MCF 10A (cell line): ENCODE measurements at regions of chr11 and their contacts with region 1.

Region 1: DNA sequence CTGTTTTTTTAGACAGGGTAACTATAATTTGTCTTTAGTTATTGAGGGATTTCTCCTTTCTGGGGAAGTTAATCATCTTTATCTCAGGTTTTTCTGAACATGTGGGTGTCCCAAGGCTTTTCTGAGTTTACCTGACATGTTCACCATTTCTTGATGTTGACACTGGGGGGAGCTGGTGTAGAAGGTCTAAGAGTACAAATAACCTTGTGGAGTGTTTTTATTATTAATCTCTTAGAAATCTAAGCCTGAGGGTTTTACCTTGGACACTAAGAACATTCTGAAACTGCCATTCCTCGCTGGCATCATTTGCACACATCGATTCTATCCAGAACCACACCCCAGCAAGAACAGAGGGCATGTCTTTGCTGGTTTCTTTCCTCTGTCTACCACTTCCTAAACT is 15.6 kb upstream of the C11orf91 start:
- DNase-seq: peak; percentile 86
- H3K4me3 Mint-ChIP-seq: peak overlapping the region; percentile 53
- H3K27ac Mint-ChIP-seq: peak overlapping the region; percentile 78
- H3K4me1 Mint-ChIP-seq: peaks cover 31% of the 10 kb centered on the region
- H3K27me3 Mint-ChIP-seq: no peaks in the 10 kb centered on the region
- CTCF ChIP-seq: peak; percentile 45

Region 2: DNA sequence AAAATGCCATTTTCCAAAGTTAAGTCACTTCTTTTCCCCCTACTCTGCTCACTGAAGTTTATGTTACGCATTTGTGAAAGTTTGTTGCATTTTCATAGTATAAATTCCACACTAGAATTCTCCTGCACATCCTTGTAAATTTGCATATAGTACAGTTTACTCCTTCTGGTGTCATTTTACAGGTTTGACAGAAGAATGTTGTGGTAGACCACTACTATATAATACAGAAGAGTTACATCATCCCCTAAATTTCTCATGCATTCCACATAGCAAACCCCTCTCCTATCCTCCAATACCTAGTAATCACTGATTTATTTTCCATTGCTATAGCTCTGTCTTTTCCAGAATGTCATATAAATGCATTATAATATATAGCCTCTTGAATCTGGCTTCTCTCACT is 986.3 kb before region 1 on chr11:
- CTCF ChIA-PET with region 1: no interaction called
- POLR2A ChIA-PET with region 1: no interaction called
- intact Hi-C with region 1: no loop called
- DNase-seq: no peak
- H3K4me3 Mint-ChIP-seq: no peak overlapping the region
- H3K27ac Mint-ChIP-seq: no peak overlapping the region
- H3K4me1 Mint-ChIP-seq: no peaks in the 10 kb centered on the region
- H3K27me3 Mint-ChIP-seq: peaks cover 11% of the 10 kb centered on the region
- CTCF ChIP-seq: no peak

Region 3: DNA sequence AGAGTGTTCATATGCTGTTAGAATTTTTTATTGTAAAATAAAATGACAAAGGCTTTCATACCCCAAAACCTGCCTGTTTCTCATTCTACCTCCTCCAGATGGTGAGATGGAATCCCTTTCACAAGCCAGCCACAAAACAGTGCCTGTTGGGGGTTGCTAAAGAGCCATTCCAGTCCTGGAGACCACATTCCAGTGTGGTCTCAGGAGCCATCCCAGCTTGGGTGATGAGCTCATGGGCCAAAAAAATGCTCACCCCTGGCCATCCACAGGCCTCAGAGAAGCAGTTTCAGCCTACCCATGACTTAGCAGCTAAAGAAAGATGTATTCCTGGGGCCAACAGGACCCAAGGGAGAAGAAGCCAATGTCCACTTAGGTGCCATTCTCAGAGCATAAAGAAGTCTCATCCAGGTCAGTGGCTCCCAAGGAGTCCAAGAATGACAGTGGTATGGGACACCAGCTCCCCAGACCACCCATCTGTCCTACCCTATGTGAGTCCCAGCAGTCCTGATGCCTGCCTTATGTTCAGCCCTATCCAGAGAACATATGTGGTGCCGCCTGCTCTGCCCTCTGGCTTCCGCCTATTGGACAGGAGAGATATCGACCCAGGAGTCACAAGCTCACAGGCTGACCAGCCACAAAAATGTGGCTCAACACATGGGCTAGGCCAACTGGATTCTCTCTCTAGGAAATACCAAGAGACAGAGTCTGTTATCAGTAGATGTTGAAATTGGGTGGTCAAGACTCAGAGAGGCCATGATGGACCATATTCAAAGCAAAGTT is 42.0 kb before region 1 on chr11:
- CTCF ChIA-PET with region 1: no interaction called
- POLR2A ChIA-PET with region 1: no interaction called
- intact Hi-C with region 1: no loop called
- DNase-seq: no peak
- H3K4me3 Mint-ChIP-seq: no peak overlapping the region
- H3K27ac Mint-ChIP-seq: no peak overlapping the region
- H3K4me1 Mint-ChIP-seq: no peaks in the 10 kb centered on the region
- H3K27me3 Mint-ChIP-seq: peaks cover 2% of the 10 kb centered on the region
- CTCF ChIP-seq: no peak

Region 4: GRCh38 chr11:33700425-33701271 is 15.6 kb before region 1 on chr11 and contains the start of gene C11orf91:
- CTCF ChIA-PET with region 1: interaction called, 37 read pairs
- POLR2A ChIA-PET with region 1: interaction called, 67 read pairs
- intact Hi-C with region 1: no loop called
- DNase-seq: peak; percentile 94
- H3K4me3 Mint-ChIP-seq: peak within 1 kb of the TSS; percentile 79
- H3K27ac Mint-ChIP-seq: peak within 1 kb of the TSS; percentile 92
- H3K4me1 Mint-ChIP-seq: peaks cover 45% of the 10 kb centered on the region
- H3K27me3 Mint-ChIP-seq: no peaks in the 10 kb centered on the region
- CTCF ChIP-seq: no peak
- total RNA-seq, gene C11orf91: 2.8 and 2.9 TPM in 2 replicates

Region 5: DNA sequence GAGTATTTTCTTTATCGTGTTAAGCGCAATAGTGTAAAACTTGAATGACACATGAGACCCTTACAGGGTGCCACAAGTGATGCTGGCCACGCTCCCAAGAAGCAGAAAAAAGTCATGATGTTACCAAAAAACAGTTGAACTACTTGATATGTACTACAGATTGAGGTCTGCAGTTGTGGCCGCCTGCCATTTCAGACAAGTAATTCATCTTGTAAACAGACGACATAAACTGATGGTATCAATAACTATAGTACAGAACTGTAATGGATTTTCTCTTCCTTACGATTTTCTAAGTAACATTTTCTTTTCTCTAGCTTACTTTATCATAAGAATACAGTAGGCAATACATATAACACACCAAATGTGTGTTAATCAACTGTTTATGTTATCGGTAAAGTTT is 14.5 kb after region 1 on chr11:
- CTCF ChIA-PET with region 1: interaction called, 78 read pairs
- POLR2A ChIA-PET with region 1: interaction called, 409 read pairs
- intact Hi-C with region 1: no loop called
- DNase-seq: no peak
- H3K4me3 Mint-ChIP-seq: peak overlapping the region; percentile 15
- H3K27ac Mint-ChIP-seq: no peak overlapping the region
- H3K4me1 Mint-ChIP-seq: peaks cover 58% of the 10 kb centered on the region
- H3K27me3 Mint-ChIP-seq: no peaks in the 10 kb centered on the region
- CTCF ChIP-seq: no peak

Region 6: GRCh38 chr11:33829433-33830141 is 113.4 kb after region 1 on chr11:
- CTCF ChIA-PET with region 1: interaction called, 9 read pairs
- POLR2A ChIA-PET with region 1: no interaction called
- intact Hi-C with region 1: loop called (anchors 2 kb)
- DNase-seq: peak; percentile 77
- H3K4me3 Mint-ChIP-seq: peak overlapping the region; percentile 62
- H3K27ac Mint-ChIP-seq: peak overlapping the region; percentile 42
- H3K4me1 Mint-ChIP-seq: peaks cover 6% of the 10 kb centered on the region
- H3K27me3 Mint-ChIP-seq: peaks cover 15% of the 10 kb centered on the region
- CTCF ChIP-seq: peak; percentile 82

Region 7: DNA sequence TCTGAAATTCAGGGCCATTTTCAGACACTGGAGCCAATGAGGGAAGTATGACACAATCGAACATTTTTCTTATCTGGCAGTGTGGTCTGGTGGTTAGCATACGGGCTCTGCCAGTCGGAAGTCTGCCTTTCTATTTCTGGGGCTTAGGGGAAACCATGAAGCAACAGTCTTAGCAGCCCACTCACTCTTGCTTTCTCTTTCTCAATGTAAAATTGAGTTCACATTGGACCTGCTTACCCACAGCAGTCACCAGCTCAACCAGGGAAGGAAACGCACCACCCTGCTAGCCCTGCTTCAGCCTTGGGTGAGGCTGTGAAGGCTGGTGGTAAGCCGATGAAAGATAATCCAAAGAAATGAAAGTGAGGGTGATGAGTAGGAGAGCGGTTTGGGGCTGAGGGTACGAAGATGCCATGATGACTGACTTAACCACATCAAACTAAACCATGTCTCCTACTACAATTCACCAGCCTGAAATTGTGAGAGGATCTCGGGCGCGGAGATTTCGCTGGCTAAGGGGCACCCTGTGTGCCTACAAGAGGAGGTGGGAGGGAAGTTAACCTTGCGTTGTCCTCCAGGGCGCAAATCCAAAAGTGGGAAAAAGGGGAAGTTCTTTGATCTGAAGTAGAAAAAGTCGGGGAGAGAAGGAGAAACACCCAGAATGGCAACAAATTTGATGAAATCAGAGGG is 177.6 kb after region 1 on chr11:
- CTCF ChIA-PET with region 1: no interaction called
- POLR2A ChIA-PET with region 1: no interaction called
- intact Hi-C with region 1: no loop called
- DNase-seq: no peak
- H3K4me3 Mint-ChIP-seq: no peak overlapping the region
- H3K27ac Mint-ChIP-seq: no peak overlapping the region
- H3K4me1 Mint-ChIP-seq: peaks cover 10% of the 10 kb centered on the region
- H3K27me3 Mint-ChIP-seq: no peaks in the 10 kb centered on the region
- CTCF ChIP-seq: no peak